ENCODE measurements at regions of chr17 and their contacts with region 1.

Region 1: DNA sequence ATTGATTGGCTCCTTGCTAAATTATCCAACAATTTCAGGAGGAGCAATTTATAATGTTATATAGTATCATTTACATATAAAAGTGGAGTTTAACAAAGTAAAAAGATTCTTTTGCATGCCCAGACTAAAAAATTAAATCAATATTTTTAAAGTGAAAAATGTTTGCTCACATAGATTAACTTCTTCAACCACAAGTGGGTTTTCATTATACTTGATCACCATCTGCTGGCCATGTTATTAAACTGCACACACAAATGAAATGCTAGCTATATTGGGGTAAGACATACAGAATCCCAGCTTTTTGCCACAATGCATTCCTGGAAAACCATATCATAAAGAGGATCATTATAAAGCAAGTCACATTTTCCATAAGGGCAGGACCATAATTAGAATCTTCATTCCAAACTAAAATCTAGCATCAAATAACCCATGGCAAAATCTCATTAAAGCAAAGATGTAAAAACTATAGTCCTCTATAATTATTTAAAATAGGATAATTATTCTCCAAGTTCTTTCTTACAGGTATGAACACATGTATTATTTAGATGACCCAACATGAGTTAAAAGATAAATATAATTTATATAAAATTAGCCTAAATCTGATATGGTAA is 26.3 kb downstream of the CEP112 start:
- DNase-seq: peak; percentile 54
- H3K27ac ChIP-seq: no peak overlapping the region
- CTCF ChIP-seq: peak; percentile 81

Region 2: GRCh38 chr17:65231662-65232335 is 933.8 kb before region 1 on chr17:
- CTCF ChIA-PET with region 1: interaction called, 12 read pairs
- POLR2A ChIA-PET with region 1: no interaction called
- DNase-seq: peak; percentile 91
- H3K27ac ChIP-seq: no peak overlapping the region
- CTCF ChIP-seq: peak; percentile 58

Region 3: DNA sequence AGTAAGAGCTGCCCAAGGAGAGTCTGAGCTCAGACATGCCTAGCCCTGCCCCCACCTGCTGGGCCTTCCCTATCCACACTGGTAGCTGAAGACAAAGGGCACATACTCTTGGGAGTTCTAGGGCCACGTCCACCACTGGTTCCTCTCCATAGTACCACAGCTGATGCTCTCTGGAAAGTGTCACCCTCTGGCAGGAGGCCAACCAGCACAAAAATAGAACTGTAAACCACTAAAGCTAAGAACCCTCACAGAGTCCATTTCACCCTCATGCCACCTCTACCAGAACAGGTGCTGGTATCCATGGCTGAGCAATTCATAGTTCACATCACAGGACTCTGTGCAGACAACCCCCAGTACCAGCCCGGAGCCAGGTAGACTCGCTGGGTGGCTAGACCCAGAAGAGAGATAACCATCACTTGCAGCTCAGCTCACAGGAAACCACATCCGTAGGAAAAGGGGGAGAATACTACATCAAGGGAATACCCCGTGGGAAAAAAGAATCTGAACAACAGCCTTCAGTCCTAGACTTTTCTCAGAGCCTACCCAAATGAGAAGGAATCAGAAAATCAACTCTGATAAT is 89.0 kb before region 1 on chr17:
- CTCF ChIA-PET with region 1: no interaction called
- POLR2A ChIA-PET with region 1: no interaction called
- DNase-seq: no peak
- H3K27ac ChIP-seq: no peak overlapping the region
- CTCF ChIP-seq: no peak

Region 4: DNA sequence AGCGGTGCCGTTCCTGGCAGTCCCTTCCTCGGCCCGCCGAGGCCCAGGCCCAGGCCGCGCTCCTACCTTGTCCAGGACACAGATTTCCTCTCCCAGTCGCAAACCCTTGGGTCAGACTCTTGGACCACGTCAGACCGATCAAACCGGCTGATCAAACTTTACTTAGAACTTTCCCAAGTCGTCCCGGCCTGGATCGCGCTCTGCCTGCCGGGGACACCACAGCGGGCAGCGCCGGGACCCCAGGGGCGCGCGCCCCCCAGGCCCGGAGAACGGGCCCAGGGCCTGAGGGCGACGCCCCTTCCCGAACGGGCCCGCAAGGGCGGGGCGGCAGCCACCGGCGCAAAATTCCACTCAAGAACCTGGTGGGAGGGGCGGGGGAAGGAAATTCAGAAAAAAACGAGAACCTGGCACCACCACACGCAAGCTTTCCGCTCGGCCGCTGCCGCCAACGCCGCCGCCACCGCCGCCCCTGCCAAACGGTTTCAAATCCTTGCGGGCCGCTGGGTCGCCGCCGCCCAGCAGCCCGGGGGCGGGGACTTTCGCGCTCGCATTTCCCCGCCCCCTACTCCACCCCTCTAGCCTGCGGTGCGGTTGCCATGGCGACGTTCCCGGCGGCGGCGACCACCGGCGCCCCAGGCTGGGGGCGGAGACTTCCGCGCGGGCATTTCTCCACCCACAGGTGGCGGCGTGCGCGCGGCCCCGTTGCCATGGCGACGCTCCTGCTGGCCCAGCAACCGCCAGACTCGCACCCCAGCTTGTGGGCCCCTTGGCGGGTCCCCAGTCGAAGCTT is 26.2 kb after region 1 on chr17 and contains the start of gene CEP112:
- CTCF ChIA-PET with region 1: no interaction called
- POLR2A ChIA-PET with region 1: no interaction called
- DNase-seq: peak; percentile 61
- H3K27ac ChIP-seq: peak within 1 kb of the TSS; percentile 71
- CTCF ChIP-seq: no peak